ENCODE measurements at regions of chr1 and their contacts with region 1.

Region 1: GRCh38 chr1:241627453-241628259 is 12.5 kb downstream of the CHML start:
- DNase-seq: peak in 7 of 9 donors; percentile 59 to 81 (median 72)
- ATAC-seq: peak; percentile 90
- H3K4me3 ChIP-seq: peak overlapping the region; percentile 37
- H3K4me3 Mint-ChIP-seq: peak overlapping the region; percentile 55 to 87 (median 84)
- H3K27ac ChIP-seq: peak overlapping the region; percentile 70
- H3K27ac Mint-ChIP-seq: peak overlapping the region; percentile 87 to 96 (median 92)
- H3K4me1 ChIP-seq: peaks cover 0 to 9% of the 10 kb centered on the region in 2 donors
- H3K4me1 Mint-ChIP-seq: peaks cover 6 to 33% (median 25%) of the 10 kb centered on the region in 7 donors
- H3K27me3 ChIP-seq: no peaks in the 10 kb centered on the region
- H3K27me3 Mint-ChIP-seq: no peaks in the 10 kb centered on the region

Region 2: DNA sequence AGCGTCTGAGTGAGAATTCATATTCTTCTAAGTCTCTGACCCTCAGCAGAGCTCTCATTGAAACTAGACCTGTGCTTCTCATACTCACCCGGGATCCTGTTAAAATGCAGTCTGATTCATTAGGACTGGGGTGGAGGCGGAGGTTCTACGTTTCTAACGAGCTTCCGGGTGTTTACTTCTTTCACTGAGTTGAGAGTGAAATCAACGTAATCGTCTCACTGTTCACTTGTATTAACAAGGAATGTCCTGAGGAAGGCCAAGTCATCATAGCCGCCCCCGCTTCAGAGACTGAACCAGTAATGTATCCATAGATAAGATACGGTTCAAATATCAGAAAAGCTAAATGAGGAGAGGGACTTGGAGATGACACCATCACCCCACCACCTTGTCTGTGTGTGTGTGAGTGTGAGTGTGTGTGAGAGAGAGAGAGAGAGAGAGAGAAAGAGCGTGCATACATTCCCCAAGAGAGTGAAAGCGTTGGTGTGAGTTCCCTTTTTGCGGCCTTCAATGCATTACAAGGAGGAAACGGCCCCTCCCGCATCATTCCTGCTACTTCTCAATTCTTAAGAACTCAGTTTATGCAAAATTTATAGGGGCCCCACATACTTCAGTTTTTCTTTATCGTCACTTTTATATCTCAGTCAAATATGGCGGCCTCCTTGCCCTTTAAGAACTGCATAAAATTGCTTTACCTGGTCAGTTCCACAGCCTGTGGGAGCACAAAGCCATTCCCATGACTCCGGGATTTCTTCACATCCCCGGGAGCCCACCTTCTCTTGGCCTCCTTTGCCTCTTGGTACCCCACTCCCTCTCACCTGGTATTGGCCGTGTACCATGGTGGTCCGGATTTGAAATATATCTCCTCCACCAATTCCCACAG is 75.7 kb before region 1 on chr1:
- CTCF ChIA-PET with region 1: interaction called, 3 read pairs
- POLR2A ChIA-PET with region 1: no interaction called
- intact Hi-C with region 1: loop called in 1 of 2 experiments (anchors 1 kb)
- DNase-seq: peak; percentile 25 to 72 (median 61)
- ATAC-seq: peak; percentile 91
- H3K4me3 ChIP-seq: peak overlapping the region; percentile 49
- H3K4me3 Mint-ChIP-seq: peak overlapping the region; percentile 83 to 93 (median 88)
- H3K27ac ChIP-seq: peak overlapping the region; percentile 55
- H3K27ac Mint-ChIP-seq: peak overlapping the region; percentile 93 to 98 (median 96)
- H3K4me1 ChIP-seq: peaks cover 0 to 14% of the 10 kb centered on the region in 2 donors
- H3K4me1 Mint-ChIP-seq: peaks cover 14 to 36% (median 25%) of the 10 kb centered on the region in 7 donors
- H3K27me3 ChIP-seq: no peaks in the 10 kb centered on the region
- H3K27me3 Mint-ChIP-seq: peaks cover 0 to 5% (median 0%) of the 10 kb centered on the region in 5 donors

Region 3: GRCh38 chr1:241756582-241756981 is 128.9 kb after region 1 on chr1:
- CTCF ChIA-PET with region 1: no interaction called
- POLR2A ChIA-PET with region 1: no interaction called
- intact Hi-C with region 1: loop called in 1 of 2 experiments (anchors 5 kb)
- DNase-seq: peak in 1 of 9 donors; percentile 5
- ATAC-seq: no peak
- H3K4me3 ChIP-seq: no peak overlapping the region
- H3K4me3 Mint-ChIP-seq: no peak overlapping the region
- H3K27ac ChIP-seq: no peak overlapping the region
- H3K27ac Mint-ChIP-seq: no peak overlapping the region
- H3K4me1 ChIP-seq: no peaks in the 10 kb centered on the region
- H3K4me1 Mint-ChIP-seq: no peaks in the 10 kb centered on the region
- H3K27me3 ChIP-seq: no peaks in the 10 kb centered on the region
- H3K27me3 Mint-ChIP-seq: peaks cover 0 to 2% (median under 1%) of the 10 kb centered on the region in 5 donors

Region 4: DNA sequence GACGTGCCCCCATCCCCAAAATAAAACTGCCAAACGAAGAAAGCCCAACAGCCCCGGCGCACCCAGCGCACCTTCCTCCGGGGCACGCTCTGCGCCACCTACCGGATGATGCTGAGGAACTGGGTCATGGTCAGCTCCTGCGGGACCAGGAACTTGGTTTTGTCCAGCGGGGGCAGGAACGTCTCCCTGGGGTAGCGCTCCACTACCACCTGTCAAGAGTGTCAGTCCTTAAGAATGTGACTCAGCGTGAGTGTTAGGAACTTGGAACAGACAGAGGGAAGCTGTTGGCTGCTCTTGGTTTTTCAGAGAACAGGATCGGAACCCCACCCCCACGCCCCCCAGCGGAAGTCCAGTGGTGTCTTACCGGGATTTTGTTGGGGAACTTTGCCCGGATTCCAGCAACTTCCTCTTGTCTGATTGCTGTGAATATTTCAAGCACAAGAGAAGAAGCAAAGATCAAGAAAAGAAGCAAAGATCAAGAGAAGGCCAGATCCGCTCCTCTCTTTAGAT is 370.8 kb after region 1 on chr1:
- CTCF ChIA-PET with region 1: no interaction called
- POLR2A ChIA-PET with region 1: no interaction called
- intact Hi-C with region 1: loop called in 1 of 2 experiments (anchors 5 kb)
- DNase-seq: peak; percentile 10 to 53 (median 30)
- ATAC-seq: peak; percentile 69
- H3K4me3 ChIP-seq: peak overlapping the region; percentile 39
- H3K4me3 Mint-ChIP-seq: peak overlapping the region; percentile 16 to 68 (median 61)
- H3K27ac ChIP-seq: no peak overlapping the region
- H3K27ac Mint-ChIP-seq: no peak overlapping the region
- H3K4me1 ChIP-seq: no peaks in the 10 kb centered on the region
- H3K4me1 Mint-ChIP-seq: peaks cover 0 to 7% (median 5%) of the 10 kb centered on the region in 7 donors
- H3K27me3 ChIP-seq: peaks cover 0 to 3% of the 10 kb centered on the region in 2 donors
- H3K27me3 Mint-ChIP-seq: peaks cover 0 to 6% (median 4%) of the 10 kb centered on the region in 5 donors

Measured in naive thymus-derived CD4-positive, alpha-beta T cell (primary cell).